ENCODE measurements at regions of chr4 and their contacts with region 1.

Region 1: GRCh38 chr4:88533937-88534750 is 10.6 kb upstream of the PYURF start:
- DNase-seq: no peak
- ATAC-seq: no peak
- H3K4me3 ChIP-seq: no peak overlapping the region
- H3K4me3 Mint-ChIP-seq: no peak overlapping the region
- H3K27ac ChIP-seq: no peak overlapping the region
- H3K27ac Mint-ChIP-seq: no peak overlapping the region
- H3K4me1 ChIP-seq: peaks cover under 1% of the 10 kb centered on the region
- H3K4me1 Mint-ChIP-seq: peaks cover 0 to under 1% of the 10 kb centered on the region in 2 donors
- H3K27me3 ChIP-seq: no peaks in the 10 kb centered on the region
- H3K27me3 Mint-ChIP-seq: peaks cover 0 to 3% of the 10 kb centered on the region in 2 donors
- CTCF ChIP-seq: no peak

Region 2: GRCh38 chr4:88659055-88659889 is 125.1 kb after region 1 on chr4:
- intact Hi-C with region 1: loop called (anchors 1 kb)
- DNase-seq: peak in 1 of 2 donors; percentile 69
- ATAC-seq: peak; percentile 50 to 70 (median 67)
- H3K4me3 ChIP-seq: no peak overlapping the region
- H3K4me3 Mint-ChIP-seq: no peak overlapping the region
- H3K27ac ChIP-seq: no peak overlapping the region
- H3K27ac Mint-ChIP-seq: peak overlapping the region in 1 of 2 donors; percentile 41
- H3K4me1 ChIP-seq: no peaks in the 10 kb centered on the region
- H3K4me1 Mint-ChIP-seq: peaks cover 0 to 11% of the 10 kb centered on the region in 2 donors
- H3K27me3 ChIP-seq: no peaks in the 10 kb centered on the region
- H3K27me3 Mint-ChIP-seq: no peaks in the 10 kb centered on the region
- CTCF ChIP-seq: peak; percentile 39

Measured in natural killer cell (primary cell).